ENCODE measurements at regions of chr7 and their contacts with region 1.

Region 1: DNA sequence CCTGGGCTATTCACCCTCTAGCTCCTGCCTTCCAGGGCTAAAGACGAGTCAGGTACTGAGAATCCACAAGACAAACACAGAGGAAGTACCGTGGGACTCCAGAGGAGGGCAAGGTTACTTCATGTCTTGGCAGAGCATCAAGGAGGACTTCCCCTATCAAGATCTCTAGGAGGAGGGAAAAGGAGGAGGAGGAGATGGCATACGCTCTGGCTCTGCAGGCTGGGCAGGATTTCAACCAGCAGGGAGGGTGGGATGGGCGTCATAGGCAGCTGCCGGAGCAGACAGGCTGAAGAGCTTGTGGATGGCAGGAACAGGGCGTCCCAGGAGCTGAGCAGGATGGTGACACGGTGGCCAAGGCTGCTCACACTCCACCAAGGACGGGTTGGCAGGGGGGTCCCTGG is 21.3 kb downstream of the MDH2 start:
- DNase-seq: peak; percentile 93
- H3K4me3 ChIP-seq: no peak overlapping the region
- H3K27ac ChIP-seq: no peak overlapping the region
- H3K4me1 ChIP-seq: peaks cover 11% of the 10 kb centered on the region
- H3K27me3 ChIP-seq: no peaks in the 10 kb centered on the region
- CTCF ChIP-seq: peak; percentile 52 to 76

Region 2: GRCh38 chr7:75611548-75612178 is 457.6 kb before region 1 on chr7:
- CTCF ChIA-PET with region 1: no interaction called
- dilution Hi-C with region 1: no loop called
- in situ Hi-C with region 1: no loop called
- intact Hi-C with region 1: no loop called
- DNase-seq: no peak
- H3K4me3 ChIP-seq: no peak overlapping the region
- H3K27ac ChIP-seq: no peak overlapping the region
- H3K4me1 ChIP-seq: no peaks in the 10 kb centered on the region
- H3K27me3 ChIP-seq: no peaks in the 10 kb centered on the region
- CTCF ChIP-seq: no peak

Region 3: GRCh38 chr7:75988568-75989499 is 80.4 kb before region 1 on chr7:
- CTCF ChIA-PET with region 1: no interaction called
- dilution Hi-C with region 1: no loop called
- in situ Hi-C with region 1: no loop called
- intact Hi-C with region 1: no loop called
- DNase-seq: no peak
- H3K4me3 ChIP-seq: no peak overlapping the region
- H3K27ac ChIP-seq: no peak overlapping the region
- H3K4me1 ChIP-seq: peaks cover 5% of the 10 kb centered on the region
- H3K27me3 ChIP-seq: no peaks in the 10 kb centered on the region
- CTCF ChIP-seq: no peak

Region 4: GRCh38 chr7:76086070-76086469 is 16.8 kb after region 1 on chr7:
- CTCF ChIA-PET with region 1: no interaction called
- dilution Hi-C with region 1: no loop called
- in situ Hi-C with region 1: no loop called
- intact Hi-C with region 1: loop called (anchors 2 kb)
- DNase-seq: peak; percentile 66
- H3K4me3 ChIP-seq: no peak overlapping the region
- H3K27ac ChIP-seq: peak overlapping the region; percentile 55
- H3K4me1 ChIP-seq: peaks cover 56% of the 10 kb centered on the region
- H3K27me3 ChIP-seq: no peaks in the 10 kb centered on the region
- CTCF ChIP-seq: no peak

Region 5: DNA sequence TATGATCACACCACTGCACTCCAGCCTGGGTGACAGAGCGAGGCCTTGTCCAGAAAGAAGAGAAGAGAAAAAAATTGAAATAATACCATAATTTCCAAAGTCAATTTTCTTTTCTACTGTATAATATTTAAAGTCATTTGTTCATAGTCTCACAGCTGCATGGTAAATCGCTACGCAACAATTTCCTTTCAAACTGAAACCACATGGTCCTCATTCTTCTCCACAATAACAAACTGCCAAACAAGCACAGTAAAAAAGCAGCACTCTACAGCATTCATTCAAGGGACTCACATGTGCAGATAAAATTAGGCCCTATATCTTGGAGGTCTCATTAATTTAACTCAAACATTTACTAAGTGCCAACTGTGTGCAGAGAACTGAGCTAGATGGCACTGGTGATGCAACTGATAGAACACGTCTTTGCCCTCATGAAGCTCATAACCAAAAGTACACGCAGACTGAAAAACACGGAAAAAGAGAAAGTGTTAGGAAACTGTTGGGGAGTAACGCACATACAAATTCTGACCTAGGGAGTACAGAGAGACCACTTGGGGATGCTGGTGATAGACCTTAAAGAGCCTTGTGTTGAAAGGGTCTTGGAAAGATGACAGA is 64.0 kb after region 1 on chr7:
- CTCF ChIA-PET with region 1: interaction called, 12 read pairs
- dilution Hi-C with region 1: no loop called
- in situ Hi-C with region 1: loop called (anchors 5 kb)
- intact Hi-C with region 1: loop called (anchors 1 kb)
- DNase-seq: no peak
- H3K4me3 ChIP-seq: no peak overlapping the region
- H3K27ac ChIP-seq: no peak overlapping the region
- H3K4me1 ChIP-seq: no peaks in the 10 kb centered on the region
- H3K27me3 ChIP-seq: no peaks in the 10 kb centered on the region
- CTCF ChIP-seq: no peak

Region 6: DNA sequence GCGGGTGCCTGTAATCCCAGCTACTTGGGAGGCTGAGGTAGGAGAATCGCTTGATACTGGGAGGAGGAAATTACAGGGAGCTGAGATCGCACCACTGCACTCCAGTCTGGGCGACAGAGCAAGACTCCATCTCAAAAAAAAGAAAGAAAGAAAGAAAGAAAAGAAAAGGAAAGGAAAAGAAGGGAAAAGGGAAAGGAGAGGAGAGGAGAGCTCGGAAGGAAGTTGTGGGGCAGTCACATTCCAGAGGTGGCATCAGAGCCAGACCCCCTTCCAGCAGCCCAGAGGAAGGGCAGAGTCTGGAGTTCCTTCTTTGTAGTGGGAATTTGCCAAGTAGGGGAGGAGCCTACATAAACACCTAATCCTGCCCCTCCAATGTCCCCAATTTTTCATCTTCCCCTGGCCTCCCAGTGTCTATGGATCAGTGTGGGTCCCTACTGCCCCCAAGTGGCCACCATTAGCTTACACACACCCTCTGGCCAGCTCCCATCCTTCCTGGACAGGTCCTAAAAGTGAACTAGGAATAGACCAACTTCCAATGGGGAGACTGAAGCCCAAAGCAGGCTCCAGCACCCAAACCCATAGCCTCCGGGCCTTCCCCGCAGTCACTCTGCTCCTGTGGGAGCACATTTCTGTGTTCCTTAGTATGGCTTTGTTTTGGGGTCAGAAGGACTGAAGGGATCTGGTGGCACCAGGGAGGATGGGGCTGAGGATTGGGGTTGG is 193.6 kb after region 1 on chr7:
- CTCF ChIA-PET with region 1: no interaction called
- dilution Hi-C with region 1: no loop called
- in situ Hi-C with region 1: no loop called
- intact Hi-C with region 1: loop called (anchors 1 kb)
- DNase-seq: peak; percentile 48
- H3K4me3 ChIP-seq: no peak overlapping the region
- H3K27ac ChIP-seq: no peak overlapping the region
- H3K4me1 ChIP-seq: peaks cover 5% of the 10 kb centered on the region
- H3K27me3 ChIP-seq: peaks cover 5% of the 10 kb centered on the region
- CTCF ChIP-seq: peak; percentile 79 to 90

Measured in mammary epithelial cell (primary cell).